ENCODE measurements at regions of chr3 and their contacts with region 1.

Region 1: DNA sequence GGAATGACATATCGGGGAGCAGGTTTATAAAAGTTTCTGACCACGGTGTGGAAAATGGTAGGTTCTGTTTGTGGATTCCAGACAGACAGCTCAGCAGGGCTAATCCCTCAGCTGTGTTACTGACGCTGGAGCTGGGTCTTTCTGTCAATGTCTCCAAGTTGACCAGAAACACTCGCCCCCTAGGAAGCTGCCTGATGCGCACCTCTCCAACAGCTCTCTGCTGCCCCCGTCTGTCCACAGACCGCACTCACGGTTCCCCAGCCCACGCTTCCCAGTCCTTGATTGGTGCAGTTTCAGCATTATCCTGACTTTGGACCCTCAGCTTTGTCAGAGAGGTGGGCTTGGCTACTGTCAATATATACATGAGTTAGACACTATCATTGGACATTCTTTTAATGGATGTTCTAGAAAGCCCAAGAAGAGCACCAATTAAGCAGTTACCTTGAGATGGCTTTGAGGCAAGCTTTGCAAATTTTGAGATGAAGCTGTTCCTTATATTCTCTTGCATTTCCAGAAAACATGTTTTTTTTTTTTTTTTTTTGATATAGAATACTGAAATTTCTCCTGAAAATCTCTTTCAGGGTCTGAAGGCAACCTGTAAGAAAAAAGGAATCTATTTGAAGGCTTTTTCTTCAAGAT is 98.9 kb upstream of the TBC1D5 start:
- DNase-seq: peak; percentile 27
- H3K4me3 ChIP-seq: no peak overlapping the region
- H3K27ac ChIP-seq: no peak overlapping the region
- H3K27me3 ChIP-seq: no peaks in the 10 kb centered on the region
- CTCF ChIP-seq: peak; percentile 99

Region 2: GRCh38 chr3:16600780-16601539 is 1240.3 kb before region 1 on chr3:
- CTCF ChIA-PET with region 1: interaction called, 20 read pairs
- POLR2A ChIA-PET with region 1: no interaction called
- DNase-seq: peak; percentile 68
- H3K4me3 ChIP-seq: no peak overlapping the region
- H3K27ac ChIP-seq: no peak overlapping the region
- H3K27me3 ChIP-seq: no peaks in the 10 kb centered on the region
- CTCF ChIP-seq: peak; percentile 83

Region 3: GRCh38 chr3:17266846-17267245 is 574.5 kb before region 1 on chr3:
- CTCF ChIA-PET with region 1: interaction called, 12 read pairs
- POLR2A ChIA-PET with region 1: no interaction called
- DNase-seq: no peak
- H3K4me3 ChIP-seq: no peak overlapping the region
- H3K27ac ChIP-seq: no peak overlapping the region
- H3K27me3 ChIP-seq: no peaks in the 10 kb centered on the region
- CTCF ChIP-seq: no peak

Region 4: GRCh38 chr3:17423786-17424536 is 417.3 kb before region 1 on chr3:
- CTCF ChIA-PET with region 1: interaction called, 95 read pairs
- POLR2A ChIA-PET with region 1: no interaction called
- DNase-seq: no peak
- H3K4me3 ChIP-seq: no peak overlapping the region
- H3K27ac ChIP-seq: no peak overlapping the region
- H3K27me3 ChIP-seq: no peaks in the 10 kb centered on the region
- CTCF ChIP-seq: no peak

Region 5: GRCh38 chr3:17442332-17443049 is 398.8 kb before region 1 on chr3:
- CTCF ChIA-PET with region 1: interaction called, 13 read pairs
- POLR2A ChIA-PET with region 1: no interaction called
- DNase-seq: no peak
- H3K4me3 ChIP-seq: no peak overlapping the region
- H3K27ac ChIP-seq: no peak overlapping the region
- H3K27me3 ChIP-seq: no peaks in the 10 kb centered on the region
- CTCF ChIP-seq: no peak

Region 6: GRCh38 chr3:17544632-17545031 is 296.7 kb before region 1 on chr3:
- CTCF ChIA-PET with region 1: interaction called, 14 read pairs
- POLR2A ChIA-PET with region 1: no interaction called
- DNase-seq: no peak
- H3K4me3 ChIP-seq: no peak overlapping the region
- H3K27ac ChIP-seq: no peak overlapping the region
- H3K27me3 ChIP-seq: no peaks in the 10 kb centered on the region
- CTCF ChIP-seq: peak; percentile 44

Region 7: DNA sequence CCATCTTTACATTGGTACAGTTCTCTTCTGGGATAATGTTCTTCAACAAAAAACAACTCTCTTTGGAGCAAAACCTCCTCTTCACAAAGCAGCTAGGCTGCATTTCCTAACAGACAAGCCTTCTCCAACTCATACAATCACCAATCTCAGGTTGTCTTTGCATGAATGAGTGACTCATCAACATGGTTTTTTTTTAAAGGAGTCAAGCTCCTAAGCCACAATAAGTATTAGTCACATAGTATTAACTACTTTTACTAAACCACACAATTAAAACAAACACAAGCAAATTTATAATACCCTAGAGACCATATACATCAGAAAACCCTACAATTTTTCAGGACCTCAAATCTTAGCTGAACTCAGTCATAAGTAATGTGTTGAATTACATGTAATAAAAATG is 236.3 kb before region 1 on chr3:
- CTCF ChIA-PET with region 1: no interaction called
- POLR2A ChIA-PET with region 1: no interaction called
- DNase-seq: peak; percentile 29
- H3K4me3 ChIP-seq: no peak overlapping the region
- H3K27ac ChIP-seq: no peak overlapping the region
- H3K27me3 ChIP-seq: no peaks in the 10 kb centered on the region
- CTCF ChIP-seq: no peak

Region 8: GRCh38 chr3:17800232-17800631 is 41.1 kb before region 1 on chr3:
- CTCF ChIA-PET with region 1: interaction called, 12 read pairs
- POLR2A ChIA-PET with region 1: no interaction called
- DNase-seq: no peak
- H3K4me3 ChIP-seq: no peak overlapping the region
- H3K27ac ChIP-seq: no peak overlapping the region
- H3K27me3 ChIP-seq: no peaks in the 10 kb centered on the region
- CTCF ChIP-seq: no peak